Left lung (tissue), 14 donors: ENCODE measurements at regions of chr4 and their contacts with region 1.

Region 1: DNA sequence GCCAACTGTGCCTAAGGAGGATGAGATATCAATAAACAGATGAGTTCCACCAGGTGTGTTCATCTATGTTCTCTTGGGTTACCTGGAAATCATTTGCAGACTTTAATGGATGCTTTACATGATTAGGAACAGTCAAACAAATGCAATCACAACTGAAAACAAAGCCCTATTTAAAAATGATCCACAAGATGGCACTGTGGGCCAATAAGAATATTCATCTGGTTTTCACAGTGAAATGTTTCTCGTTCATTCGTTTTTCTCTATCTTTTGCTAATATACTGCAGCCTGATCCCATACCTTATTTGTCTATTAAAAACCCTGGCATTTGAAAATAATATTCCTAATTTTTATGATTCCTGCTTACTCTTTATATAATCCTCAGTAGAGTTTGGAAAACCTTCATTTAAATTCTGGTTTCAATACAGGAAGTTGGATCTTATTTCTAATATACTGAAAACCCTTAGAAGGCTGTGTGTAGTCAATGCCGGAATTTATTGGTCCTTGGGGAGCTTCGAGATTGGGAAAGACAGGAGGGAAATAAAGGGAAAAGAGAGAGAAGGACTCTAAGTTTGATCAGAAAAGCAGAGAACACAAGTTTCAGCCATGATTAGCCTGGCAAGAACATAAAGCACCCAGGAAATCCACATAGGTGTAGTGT is 63.8 kb upstream of the TAPT1 start:
- DNase-seq: peak in 2 of 4 donors; percentile 47 to 48
- ATAC-seq: peak; percentile 78
- H3K4me3 ChIP-seq: no peak overlapping the region
- H3K27ac ChIP-seq: no peak overlapping the region
- H3K4me1 ChIP-seq: no peaks in the 10 kb centered on the region
- H3K27me3 ChIP-seq: peaks cover 0 to 16% of the 10 kb centered on the region in 2 donors
- CTCF ChIP-seq: peak; percentile 42 to 62

Region 2: GRCh38 chr4:16443504-16444088 is 153.6 kb after region 1 on chr4:
- intact Hi-C with region 1: loop called in 1 of 2 experiments (anchors 10 kb)
- DNase-seq: peak in 1 of 4 donors; percentile 14
- ATAC-seq: peak; percentile 82
- H3K4me3 ChIP-seq: no peak overlapping the region
- H3K27ac ChIP-seq: no peak overlapping the region
- H3K4me1 ChIP-seq: no peaks in the 10 kb centered on the region
- H3K27me3 ChIP-seq: no peaks in the 10 kb centered on the region
- CTCF ChIP-seq: peak; percentile 60 to 71

Region 3: DNA sequence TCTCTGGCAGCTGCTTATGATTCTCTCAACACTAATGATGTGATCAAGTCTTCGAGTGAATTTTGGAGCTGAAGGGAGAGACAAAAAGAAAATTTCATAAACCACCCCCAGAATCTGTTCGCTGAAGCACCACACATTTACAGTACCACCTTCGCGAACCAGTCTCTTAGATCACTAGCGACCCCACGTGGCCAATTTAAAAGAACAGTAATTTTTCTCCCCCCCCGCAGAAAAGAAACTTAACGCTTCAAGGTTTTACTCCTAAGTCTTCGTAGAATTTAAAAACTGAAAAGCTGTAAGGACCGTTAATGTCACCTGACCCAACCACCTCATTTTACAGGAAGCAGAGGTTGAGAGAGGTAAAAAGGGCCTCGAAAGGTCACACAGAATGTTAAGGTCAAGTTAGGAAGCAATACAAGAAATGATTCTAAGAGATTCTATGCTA is 1034.4 kb after region 1 on chr4:
- intact Hi-C with region 1: loop called in 1 of 2 experiments (anchors 10 kb)
- DNase-seq: peak in 2 of 4 donors; percentile 49 to 53
- ATAC-seq: peak; percentile 72
- H3K4me3 ChIP-seq: no peak overlapping the region
- H3K27ac ChIP-seq: no peak overlapping the region
- H3K4me1 ChIP-seq: peaks cover 0 to 10% of the 10 kb centered on the region in 2 donors
- H3K27me3 ChIP-seq: no peaks in the 10 kb centered on the region
- CTCF ChIP-seq: peak in 1 of 2 donors; percentile 47